GM13977 (cell line): ENCODE measurements at regions of chr17 and their contacts with region 1.

Region 1: DNA sequence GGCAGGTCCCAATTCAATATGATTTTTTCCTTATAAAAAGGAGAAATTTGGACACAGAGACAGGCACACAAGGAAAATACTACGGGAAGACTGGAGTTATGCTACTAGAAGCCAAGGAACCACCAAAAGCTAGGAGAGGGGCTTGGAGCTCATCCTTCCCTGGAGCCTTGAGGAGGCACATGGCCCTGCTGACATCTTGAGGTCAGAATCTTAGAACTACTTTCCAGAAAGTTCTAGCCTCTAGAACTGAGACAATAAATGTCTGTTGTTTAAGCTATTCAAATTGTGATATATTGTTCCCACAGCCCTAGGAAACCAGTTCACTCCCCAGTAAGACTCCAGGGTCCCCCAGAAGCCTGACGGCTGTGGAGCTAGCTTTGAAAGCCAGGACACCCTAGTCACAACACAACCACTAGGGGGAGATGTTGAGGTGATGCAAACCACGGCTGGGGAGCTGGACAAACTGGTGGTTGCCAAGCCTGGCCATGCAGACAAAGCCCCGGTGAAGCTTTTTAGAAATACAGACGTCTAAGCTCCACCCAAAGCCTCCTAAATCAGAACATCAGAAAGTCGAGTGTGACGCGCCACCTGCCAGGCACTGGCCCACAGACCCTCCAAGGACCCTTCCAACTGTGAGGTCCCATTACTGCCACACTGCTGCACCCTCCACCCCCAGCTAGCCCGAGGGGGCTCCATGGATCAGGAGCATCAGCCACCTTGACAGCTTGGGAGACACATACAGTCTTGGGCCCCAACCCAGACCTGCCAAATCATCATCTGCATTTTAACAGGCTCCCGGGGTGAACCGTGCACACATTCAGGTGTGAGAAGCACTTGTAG is 106.4 kb downstream of the SLC39A11 start:
- DNase-seq: peak; percentile 85
- CTCF ChIP-seq: peak; percentile 88

Region 2: GRCh38 chr17:72901083-72901482 is 85.0 kb before region 1 on chr17:
- in situ Hi-C with region 1: no loop called
- DNase-seq: no peak
- CTCF ChIP-seq: no peak

Region 3: DNA sequence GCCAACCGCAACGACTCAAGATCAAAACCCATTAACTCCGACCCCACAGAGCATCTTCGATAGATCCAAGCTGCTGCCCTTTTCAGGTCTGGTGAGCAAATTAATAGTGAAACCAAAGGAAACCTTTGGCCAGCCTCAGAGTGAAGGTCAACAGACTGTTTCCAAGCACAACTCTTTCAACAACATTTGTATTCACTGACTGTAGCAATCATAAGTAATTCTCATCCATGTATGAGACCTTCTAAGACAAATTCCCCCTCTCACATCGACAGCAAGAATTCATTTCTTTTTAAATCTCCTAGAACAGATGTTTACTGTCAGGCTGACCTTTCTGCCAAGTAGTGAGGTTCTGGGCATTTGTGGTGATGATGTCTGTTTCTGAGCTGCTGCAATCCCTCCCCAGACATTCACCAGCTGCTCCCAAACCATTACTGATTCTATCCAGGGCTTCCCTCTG is 42.2 kb after region 1 on chr17:
- in situ Hi-C with region 1: no loop called
- DNase-seq: no peak
- CTCF ChIP-seq: no peak

Region 4: GRCh38 chr17:73058022-73058421 is 71.9 kb after region 1 on chr17:
- in situ Hi-C with region 1: no loop called
- DNase-seq: no peak
- CTCF ChIP-seq: no peak

Region 5: DNA sequence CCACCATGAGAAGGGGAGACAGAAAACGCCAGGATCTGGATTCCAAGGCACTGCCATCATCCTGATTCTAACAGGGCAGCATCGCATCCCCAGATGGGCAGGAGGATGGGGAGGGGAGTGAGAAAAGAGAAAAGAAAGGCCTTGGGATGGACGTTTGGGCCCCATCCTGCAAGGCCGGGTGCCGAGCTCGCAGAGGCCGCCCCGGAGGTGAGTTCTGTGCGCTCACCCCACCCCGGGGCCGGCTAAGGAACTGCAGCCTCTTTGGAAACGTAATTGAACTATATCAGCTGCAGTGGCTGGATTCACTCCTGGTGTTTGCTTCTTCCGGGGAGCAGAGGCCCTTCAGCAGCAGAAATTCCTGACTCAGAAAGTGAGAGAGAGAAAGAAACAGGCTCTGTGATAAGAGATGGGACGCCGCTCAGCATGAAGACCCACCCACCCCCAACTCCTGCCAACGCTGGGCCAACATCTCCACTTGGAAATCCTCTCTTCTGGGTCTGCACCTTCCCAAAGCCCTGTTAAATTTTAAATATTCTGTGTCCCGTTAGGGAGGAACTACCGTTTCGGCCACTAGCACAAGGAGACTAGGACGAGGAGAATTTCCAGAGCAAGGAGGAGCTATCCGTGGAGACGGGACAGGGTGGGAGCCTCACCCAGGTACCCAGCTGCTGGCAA is 170.2 kb after region 1 on chr17:
- in situ Hi-C with region 1: loop called (anchors 25 kb)
- DNase-seq: peak; percentile 76
- CTCF ChIP-seq: peak; percentile 82